Activated CD8-positive, alpha-beta memory T cell treated with anti-CD3 and anti-CD28 coated beads, Interleukin-2, amount 10 ng/mL, durations not matched to agents 7 days and 5 days (primary cell): ENCODE measurements at regions of chr9 and their contacts with region 1.

Region 1: DNA sequence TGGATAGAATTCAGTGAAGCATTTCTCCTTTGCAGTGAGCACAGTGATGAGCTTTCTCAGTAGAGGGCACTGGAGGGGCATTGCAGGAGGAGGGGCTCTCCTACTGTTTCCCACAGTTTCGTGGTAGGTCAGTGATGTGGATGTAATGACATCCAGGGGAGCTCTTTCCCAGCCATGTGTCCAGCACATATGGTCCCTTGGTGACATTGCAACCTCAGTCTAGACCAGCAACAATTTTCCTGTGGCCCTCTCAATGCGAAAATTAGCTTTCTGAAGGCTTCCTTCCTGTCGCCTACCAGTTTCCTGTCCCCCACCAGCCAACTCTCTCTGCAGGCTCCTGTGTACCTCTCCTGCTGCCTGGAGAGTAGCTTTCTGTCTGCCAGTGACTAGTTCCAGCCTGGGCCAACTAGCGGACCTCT is 6.9 kb upstream of the PDCL start:
- DNase-seq: peak; percentile 62
- ATAC-seq: peak; percentile 69
- H3K4me3 Mint-ChIP-seq: peak overlapping the region; percentile 54
- H3K27ac Mint-ChIP-seq: peak overlapping the region; percentile 74
- H3K4me1 Mint-ChIP-seq: peaks cover 20% of the 10 kb centered on the region
- H3K27me3 Mint-ChIP-seq: no peaks in the 10 kb centered on the region

Region 2: GRCh38 chr9:122846371-122846940 is 11.1 kb after region 1 on chr9:
- CTCF ChIA-PET with region 1: interaction called, 11 read pairs
- DNase-seq: no peak
- ATAC-seq: peak; percentile 6
- H3K4me3 Mint-ChIP-seq: no peak overlapping the region
- H3K27ac Mint-ChIP-seq: peak overlapping the region; percentile 74
- H3K4me1 Mint-ChIP-seq: peaks cover 26% of the 10 kb centered on the region
- H3K27me3 Mint-ChIP-seq: no peaks in the 10 kb centered on the region